Naive thymus-derived CD8-positive, alpha-beta T cell (primary cell): ENCODE measurements at regions of chr12 and their contacts with region 1.

Region 1: DNA sequence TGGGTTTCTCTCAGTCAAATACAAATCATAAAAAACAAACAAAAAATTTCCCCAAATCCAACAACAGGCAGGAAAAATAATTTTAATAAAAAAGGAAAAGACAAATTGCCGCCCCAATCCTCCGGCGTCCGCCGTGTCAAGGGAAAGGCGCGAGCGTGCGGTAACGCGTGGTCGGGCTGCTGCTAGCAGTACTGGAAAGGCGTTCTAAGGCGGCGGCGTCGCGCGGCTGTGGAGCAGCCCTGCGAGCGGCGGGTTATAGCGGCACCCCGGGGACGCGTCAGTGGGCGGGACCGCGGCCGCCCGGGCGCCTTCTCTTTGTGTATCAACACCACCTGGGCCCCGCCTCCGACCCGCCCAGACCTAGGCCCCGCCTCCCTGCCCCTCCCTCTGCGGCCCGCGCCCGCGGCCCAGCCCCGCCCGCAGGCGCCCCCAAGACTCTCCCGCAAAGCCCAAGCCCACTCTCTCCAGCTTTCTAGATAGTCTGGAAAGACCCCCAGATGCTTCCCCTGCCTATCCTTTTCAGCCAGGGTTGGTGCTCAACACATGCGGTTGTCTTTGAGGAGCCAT is at the start of gene SLC38A2:
- DNase-seq: peak; percentile 94 to 99 (median 96)
- ATAC-seq: peak; percentile 77 to 85
- H3K4me3 Mint-ChIP-seq: peak within 1 kb of the TSS; percentile 86 to 99 (median 98)
- H3K27ac Mint-ChIP-seq: peak within 1 kb of the TSS; percentile 85 to 100 (median 99)
- H3K4me1 Mint-ChIP-seq: peaks cover 19 to 60% (median 48%) of the 10 kb centered on the region in 4 donors
- H3K27me3 Mint-ChIP-seq: peaks cover 0 to 3% (median 0%) of the 10 kb centered on the region in 5 donors
- polyA plus RNA-seq, gene SLC38A2: 52.0 to 96.1 (median 57.4) TPM

Region 2: GRCh38 chr12:46357438-46358324 is 14.9 kb before region 1 on chr12:
- POLR2A ChIA-PET with region 1: interaction called, 14 read pairs
- DNase-seq: no peak
- ATAC-seq: peak in 1 of 2 donors; percentile 14
- H3K4me3 Mint-ChIP-seq: no peak overlapping the region
- H3K27ac Mint-ChIP-seq: peak overlapping the region in 8 of 10 donors; percentile 5 to 82 (median 49)
- H3K4me1 Mint-ChIP-seq: peaks cover 23 to 45% (median 33%) of the 10 kb centered on the region in 4 donors
- H3K27me3 Mint-ChIP-seq: no peaks in the 10 kb centered on the region

Region 3: DNA sequence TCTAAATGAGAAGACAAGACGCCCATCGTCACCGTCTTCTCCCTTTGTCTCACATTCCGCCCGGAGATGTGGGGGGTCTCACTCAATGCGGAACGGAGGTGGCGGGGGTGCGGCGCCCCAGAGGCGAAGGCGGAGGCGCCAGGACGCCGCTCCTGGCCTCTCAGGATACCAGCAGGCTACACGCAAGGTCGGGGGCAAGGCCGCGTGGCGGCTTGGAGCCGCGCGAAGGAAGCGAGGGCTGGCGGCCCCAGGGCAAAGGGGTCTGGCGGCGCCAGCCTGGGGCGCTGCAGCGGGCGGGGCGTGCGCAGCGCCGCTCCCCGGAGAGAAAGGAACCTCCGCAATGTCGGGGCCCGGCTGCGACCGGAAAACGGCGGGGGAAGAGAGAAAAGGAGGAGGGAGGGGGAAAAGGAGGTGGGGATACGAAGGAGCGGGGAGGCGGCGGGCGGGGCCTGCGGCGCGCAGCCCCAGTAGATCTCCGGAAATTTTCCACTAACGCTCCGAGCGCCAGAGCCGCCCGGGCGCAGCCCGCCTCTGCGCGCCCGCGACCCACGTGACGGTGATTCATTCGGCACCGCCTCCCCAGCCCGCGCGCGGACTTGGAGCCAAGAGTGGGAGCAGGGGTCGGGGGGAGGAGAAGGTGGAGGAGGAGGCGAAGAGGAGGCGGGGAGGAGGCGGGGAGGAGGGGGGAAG is 10.5 kb after region 1 on chr12:
- POLR2A ChIA-PET with region 1: interaction called, 45 read pairs
- DNase-seq: peak; percentile 81 to 93 (median 89)
- ATAC-seq: peak; percentile 77 to 82
- H3K4me3 Mint-ChIP-seq: peak overlapping the region; percentile 85 to 95 (median 90)
- H3K27ac Mint-ChIP-seq: peak overlapping the region; percentile 85 to 99 (median 96)
- H3K4me1 Mint-ChIP-seq: peaks cover 16 to 51% (median 41%) of the 10 kb centered on the region in 4 donors
- H3K27me3 Mint-ChIP-seq: no peaks in the 10 kb centered on the region

Region 4: DNA sequence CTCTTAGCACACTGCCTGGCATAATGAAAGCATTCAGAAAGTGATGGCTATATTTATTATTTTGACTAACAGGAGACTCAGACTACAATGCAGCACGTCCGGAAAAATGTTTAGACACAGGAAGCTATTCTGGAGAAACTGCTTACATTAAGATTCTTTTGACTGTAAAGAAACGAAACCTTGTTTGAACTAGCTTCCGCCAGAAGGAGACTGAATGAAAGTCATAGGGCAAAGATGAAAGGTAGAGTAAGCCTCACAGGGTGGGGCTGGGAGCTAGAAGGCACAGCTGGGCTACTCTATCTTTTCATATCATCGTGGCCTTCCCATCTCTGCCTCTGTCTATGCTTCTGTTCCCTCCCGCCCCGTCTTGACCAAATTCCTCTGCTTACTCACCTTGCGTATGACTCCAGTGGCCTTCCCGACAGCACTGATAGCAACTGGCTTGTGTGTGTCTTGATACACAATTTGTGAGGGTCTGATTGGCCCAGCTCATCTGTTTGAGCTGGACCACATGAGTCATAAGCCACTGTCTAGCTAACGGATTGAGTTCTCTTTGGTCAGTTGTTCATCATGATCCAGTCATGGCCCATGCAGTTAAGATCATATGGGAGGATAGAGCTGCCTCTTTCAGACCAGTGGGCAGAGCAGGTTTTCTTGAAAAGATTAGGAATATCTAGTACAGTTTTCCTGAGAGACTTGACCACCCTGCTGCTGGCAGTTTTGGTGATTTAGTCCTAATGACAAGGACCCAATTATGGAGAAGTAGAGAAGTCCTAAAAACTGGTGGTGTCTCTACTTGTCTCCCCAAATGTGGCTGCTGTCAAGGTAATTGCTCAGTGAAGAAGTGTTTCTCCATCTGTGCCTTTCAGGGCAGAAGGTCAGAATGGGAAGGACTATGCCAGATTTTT is 151.5 kb after region 1 on chr12:
- POLR2A ChIA-PET with region 1: interaction called, 11 read pairs
- DNase-seq: peak in 7 of 10 donors; percentile 14 to 71 (median 47)
- ATAC-seq: peak; percentile 97 to 98
- H3K4me3 Mint-ChIP-seq: peak overlapping the region; percentile 59 to 86 (median 71)
- H3K27ac Mint-ChIP-seq: peak overlapping the region; percentile 67 to 98 (median 88)
- H3K4me1 Mint-ChIP-seq: peaks cover 20 to 59% (median 42%) of the 10 kb centered on the region in 4 donors
- H3K27me3 Mint-ChIP-seq: no peaks in the 10 kb centered on the region

Region 5: GRCh38 chr12:46585854-46586621 is 213.4 kb after region 1 on chr12:
- POLR2A ChIA-PET with region 1: interaction called, 10 read pairs
- DNase-seq: peak in 9 of 10 donors; percentile 10 to 83 (median 55)
- ATAC-seq: peak; percentile 64 to 74
- H3K4me3 Mint-ChIP-seq: peak overlapping the region; percentile 46 to 81 (median 73)
- H3K27ac Mint-ChIP-seq: peak overlapping the region; percentile 87 to 96 (median 90)
- H3K4me1 Mint-ChIP-seq: peaks cover 46 to 63% (median 57%) of the 10 kb centered on the region in 4 donors
- H3K27me3 Mint-ChIP-seq: no peaks in the 10 kb centered on the region

Region 6: DNA sequence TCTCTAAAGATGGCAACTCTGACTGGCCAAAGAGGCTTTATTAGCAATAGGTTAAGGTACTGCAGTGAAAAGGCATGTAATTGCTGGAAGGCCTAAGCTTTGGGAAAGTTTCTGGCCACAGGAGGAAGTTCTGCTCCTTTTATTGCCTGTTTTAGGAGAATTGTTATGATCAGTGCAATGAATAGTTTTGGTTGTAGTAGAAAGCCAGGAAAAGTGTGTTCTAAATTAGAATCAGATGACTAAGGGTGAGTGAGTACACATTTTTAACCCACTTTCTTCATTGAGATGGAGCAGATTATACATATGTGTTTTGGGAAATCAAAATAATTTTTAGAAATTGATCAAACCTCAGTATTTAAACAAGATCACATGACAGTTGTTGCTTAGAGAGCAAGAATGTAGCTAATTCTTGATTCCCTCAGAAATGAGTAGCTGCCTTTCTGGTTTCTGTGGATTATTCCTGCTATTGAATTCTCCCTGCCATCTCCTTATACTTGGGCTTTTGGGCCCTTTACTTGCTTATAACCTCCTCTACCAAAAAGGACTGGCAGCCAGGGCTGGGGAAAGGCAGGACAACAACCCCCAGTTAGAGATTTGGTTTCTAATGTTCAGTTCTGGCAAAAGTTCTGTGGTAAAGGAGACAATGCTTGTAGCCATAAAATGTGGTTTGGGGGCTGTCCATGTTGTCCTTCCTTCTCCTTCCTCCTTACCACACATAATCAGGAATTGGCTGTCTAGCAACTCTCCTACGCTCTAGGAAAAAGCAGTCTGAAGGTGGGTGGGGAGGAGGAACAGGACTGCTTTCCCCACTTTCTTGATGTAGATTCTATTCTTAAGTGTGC is 236.0 kb after region 1 on chr12:
- POLR2A ChIA-PET with region 1: interaction called, 11 read pairs
- DNase-seq: no peak
- ATAC-seq: no peak
- H3K4me3 Mint-ChIP-seq: peak overlapping the region in 9 of 10 donors; percentile 48 to 87 (median 76)
- H3K27ac Mint-ChIP-seq: peak overlapping the region; percentile 54 to 94 (median 84)
- H3K4me1 Mint-ChIP-seq: peaks cover 41 to 63% (median 48%) of the 10 kb centered on the region in 4 donors
- H3K27me3 Mint-ChIP-seq: no peaks in the 10 kb centered on the region